Dorsolateral prefrontal cortex (tissue), 120 donors: ENCODE measurements at regions of chr3 and their contacts with region 1.

Region 1: DNA sequence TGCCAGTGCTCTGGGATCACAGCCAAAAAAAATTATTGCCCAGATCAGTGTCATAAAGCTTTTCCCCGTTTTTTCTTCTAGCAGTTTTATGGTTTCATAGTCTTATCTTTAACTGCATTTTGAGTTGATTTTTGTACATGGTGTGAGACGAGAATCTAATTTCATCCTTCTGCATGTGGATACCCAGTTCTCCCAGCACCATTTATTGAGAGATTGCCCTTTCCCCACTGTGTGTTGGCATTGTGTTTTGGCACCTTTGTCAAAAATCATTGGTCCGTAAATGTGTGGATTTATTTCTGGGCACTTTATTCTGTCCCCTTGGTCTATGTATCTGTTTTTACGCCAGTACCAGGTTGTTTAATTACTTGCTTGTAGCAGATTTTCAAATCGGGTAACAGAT is 122.8 kb downstream of the TAFA4 start:
- DNase-seq: no peak
- H3K4me3 ChIP-seq: no peak overlapping the region
- H3K27ac ChIP-seq: no peak overlapping the region
- H3K27me3 ChIP-seq: no peaks in the 10 kb centered on the region
- CTCF ChIP-seq: no peak

Region 2: GRCh38 chr3:68560728-68561127 is 248.9 kb before region 1 on chr3:
- intact Hi-C with region 1: loop called in 1 of 2 experiments (anchors 5 kb)
- DNase-seq: no peak
- H3K4me3 ChIP-seq: no peak overlapping the region
- H3K27ac ChIP-seq: no peak overlapping the region
- H3K27me3 ChIP-seq: no peaks in the 10 kb centered on the region
- CTCF ChIP-seq: no peak

Region 3: DNA sequence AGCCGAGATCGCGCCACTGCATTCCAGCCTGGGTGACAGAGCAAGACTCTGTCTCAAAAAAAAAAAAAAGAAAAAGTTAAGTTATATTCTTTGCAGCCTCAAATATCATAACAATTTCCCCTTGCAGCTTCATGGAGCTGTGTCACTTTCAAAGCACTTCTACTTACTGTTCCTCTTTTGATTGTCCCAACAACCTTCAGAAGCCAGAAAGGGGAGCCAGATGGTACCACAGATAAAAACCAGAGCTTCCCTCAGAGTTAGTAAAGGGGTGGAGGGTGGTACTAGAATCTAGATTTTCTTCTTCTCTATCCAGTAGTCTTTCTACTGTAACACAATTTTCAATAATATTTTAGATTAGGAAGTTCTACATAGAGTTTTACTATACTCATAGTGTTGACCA is 66.1 kb before region 1 on chr3:
- intact Hi-C with region 1: no loop called
- DNase-seq: no peak
- H3K4me3 ChIP-seq: no peak overlapping the region
- H3K27ac ChIP-seq: no peak overlapping the region
- H3K27me3 ChIP-seq: no peaks in the 10 kb centered on the region
- CTCF ChIP-seq: no peak

Region 4: DNA sequence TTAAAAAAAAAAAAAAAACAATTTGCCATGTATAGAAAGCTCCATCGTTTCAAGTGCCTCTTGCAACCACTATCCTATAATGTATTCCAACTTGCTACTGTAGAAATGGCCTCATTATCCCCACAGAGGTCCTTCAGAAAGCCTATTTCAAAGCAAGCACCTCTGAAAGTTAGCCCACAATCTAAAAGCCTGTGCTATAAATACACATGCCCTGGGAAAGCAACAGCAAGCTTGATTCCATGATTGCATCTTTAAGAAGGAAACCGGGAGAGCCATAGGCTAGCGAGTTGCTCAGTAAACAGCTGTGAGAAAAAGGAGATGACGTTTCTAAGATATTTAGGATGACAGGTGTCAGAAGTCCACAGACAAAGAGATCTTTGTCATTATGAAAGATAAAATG is 94.5 kb after region 1 on chr3:
- intact Hi-C with region 1: no loop called
- DNase-seq: no peak
- H3K4me3 ChIP-seq: no peak overlapping the region
- H3K27ac ChIP-seq: no peak overlapping the region
- H3K27me3 ChIP-seq: peaks cover 0 to 19% (median 0%) of the 10 kb centered on the region in 45 donors
- CTCF ChIP-seq: no peak

Region 5: GRCh38 chr3:69458803-69459365 is 649.3 kb after region 1 on chr3:
- intact Hi-C with region 1: no loop called
- DNase-seq: no peak
- H3K4me3 ChIP-seq: no peak overlapping the region
- H3K27ac ChIP-seq: peak overlapping the region in 4 of 59 donors; percentile 1 to 74 (median 48)
- H3K27me3 ChIP-seq: no peaks in the 10 kb centered on the region
- CTCF ChIP-seq: no peak